Gastrocnemius medialis (tissue), 4 donors: ENCODE measurements at regions of chr12 and their contacts with region 1.

Region 1: DNA sequence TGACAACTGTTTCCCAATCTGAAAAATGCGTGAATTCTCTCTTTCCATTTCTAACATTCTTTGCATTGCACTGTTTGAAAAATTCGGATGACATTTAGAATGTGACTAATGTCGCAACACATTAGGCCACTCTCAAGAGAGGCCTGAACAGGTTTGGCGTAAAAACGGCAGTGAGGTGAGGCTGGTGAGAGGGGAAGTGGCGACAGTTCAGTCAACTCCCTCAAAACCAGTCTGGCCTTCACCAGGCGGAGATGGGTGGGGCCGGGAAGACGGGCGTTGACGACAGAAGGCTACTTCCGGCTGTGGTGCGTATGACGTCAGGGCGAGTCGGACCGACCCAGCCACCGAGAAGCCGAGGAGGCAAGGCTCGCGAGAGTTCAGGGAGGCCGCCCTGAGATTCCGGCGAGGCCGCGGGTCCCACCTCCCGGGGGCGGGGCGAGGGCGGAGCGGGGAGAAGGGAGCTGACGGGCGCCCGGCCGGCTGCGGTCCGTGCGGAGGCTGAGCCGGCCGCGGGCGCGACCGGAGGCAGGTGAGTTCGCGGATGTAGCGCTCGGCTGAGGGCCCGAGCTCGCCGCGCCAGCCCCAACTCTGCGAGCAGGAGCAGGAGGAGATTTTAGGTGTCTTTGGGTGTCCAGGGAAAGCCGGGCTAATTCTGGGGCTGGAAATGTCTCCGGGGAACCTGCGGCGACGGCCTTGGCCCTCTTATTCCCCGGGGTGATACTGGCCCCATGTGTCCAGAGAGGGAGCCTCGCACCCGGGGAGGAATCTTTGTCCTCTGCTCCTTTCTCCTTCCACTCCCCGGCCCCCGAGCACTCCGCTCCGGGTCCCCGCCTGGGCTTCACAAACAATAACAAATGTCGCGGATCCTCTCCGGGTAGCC is at the start of gene STK38L:
- DNase-seq: peak; percentile 79 to 91
- ATAC-seq: peak; percentile 87 to 90
- H3K4me3 ChIP-seq: peak within 1 kb of the TSS; percentile 79 to 95 (median 82)
- H3K27ac ChIP-seq: peak within 1 kb of the TSS; percentile 77 to 86 (median 82)
- H3K4me1 ChIP-seq: peaks cover 16% of the 10 kb centered on the region in 2 donors
- H3K27me3 ChIP-seq: no peaks in the 10 kb centered on the region
- CTCF ChIP-seq: peak in 1 of 5 experiments; percentile 12
- POLR2A ChIP-seq: peak; percentile 82 to 88
- total RNA-seq, gene STK38L: 12.9 to 20.0 (median 13.5) TPM

Region 2: GRCh38 chr12:27293463-27293862 is 49.4 kb after region 1 on chr12:
- in situ Hi-C with region 1: no loop called
- intact Hi-C with region 1: loop called (anchors 5 kb)
- DNase-seq: no peak
- ATAC-seq: no peak
- H3K4me3 ChIP-seq: no peak overlapping the region
- H3K27ac ChIP-seq: peak overlapping the region in 2 of 4 donors; percentile 33 to 63
- H3K4me1 ChIP-seq: peaks cover 5 to 50% of the 10 kb centered on the region in 2 donors
- H3K27me3 ChIP-seq: no peaks in the 10 kb centered on the region
- CTCF ChIP-seq: no peak
- POLR2A ChIP-seq: no peak

Region 3: DNA sequence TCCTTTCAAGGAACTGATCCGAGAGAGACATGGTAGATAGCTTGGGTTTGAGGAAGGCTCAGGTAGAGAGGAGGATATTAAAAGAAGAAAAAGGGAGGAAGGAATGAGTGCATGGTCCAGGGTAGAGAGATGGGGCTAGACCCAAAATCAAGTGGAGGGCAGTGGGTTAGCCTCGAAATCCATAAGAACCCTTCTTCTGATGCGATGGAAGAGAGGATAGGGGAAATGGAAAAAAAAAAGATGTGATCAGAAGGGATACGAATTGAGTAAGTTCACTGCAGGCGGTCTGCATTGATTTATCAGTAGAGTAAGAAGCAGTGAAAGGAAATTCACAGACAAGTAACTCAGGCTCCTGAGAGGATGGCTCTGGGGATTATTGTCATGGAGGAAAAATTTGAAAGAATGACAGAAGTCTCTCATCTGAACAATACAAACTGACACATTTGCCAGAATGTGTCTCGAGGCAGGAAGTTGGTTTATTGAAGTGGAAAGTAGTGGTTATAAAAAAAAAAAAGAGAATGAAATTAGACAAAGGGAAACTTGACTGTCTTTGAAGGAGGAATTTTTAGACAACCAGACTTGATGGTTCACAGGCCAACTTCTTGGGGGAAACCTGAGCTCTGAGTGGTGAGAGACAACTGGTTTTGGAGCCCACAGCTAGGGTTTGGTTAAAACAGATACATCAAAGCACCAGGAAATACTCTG is 290.2 kb after region 1 on chr12:
- in situ Hi-C with region 1: no loop called
- intact Hi-C with region 1: loop called (anchors 10 kb)
- DNase-seq: no peak
- ATAC-seq: no peak
- H3K4me3 ChIP-seq: no peak overlapping the region
- H3K27ac ChIP-seq: peak overlapping the region in 1 of 4 donors; percentile 21
- H3K4me1 ChIP-seq: peaks cover 38 to 62% of the 10 kb centered on the region in 2 donors
- H3K27me3 ChIP-seq: no peaks in the 10 kb centered on the region
- CTCF ChIP-seq: no peak
- POLR2A ChIP-seq: no peak